A549 (cell line): ENCODE measurements at regions of chr19 and their contacts with region 1.

Region 1: DNA sequence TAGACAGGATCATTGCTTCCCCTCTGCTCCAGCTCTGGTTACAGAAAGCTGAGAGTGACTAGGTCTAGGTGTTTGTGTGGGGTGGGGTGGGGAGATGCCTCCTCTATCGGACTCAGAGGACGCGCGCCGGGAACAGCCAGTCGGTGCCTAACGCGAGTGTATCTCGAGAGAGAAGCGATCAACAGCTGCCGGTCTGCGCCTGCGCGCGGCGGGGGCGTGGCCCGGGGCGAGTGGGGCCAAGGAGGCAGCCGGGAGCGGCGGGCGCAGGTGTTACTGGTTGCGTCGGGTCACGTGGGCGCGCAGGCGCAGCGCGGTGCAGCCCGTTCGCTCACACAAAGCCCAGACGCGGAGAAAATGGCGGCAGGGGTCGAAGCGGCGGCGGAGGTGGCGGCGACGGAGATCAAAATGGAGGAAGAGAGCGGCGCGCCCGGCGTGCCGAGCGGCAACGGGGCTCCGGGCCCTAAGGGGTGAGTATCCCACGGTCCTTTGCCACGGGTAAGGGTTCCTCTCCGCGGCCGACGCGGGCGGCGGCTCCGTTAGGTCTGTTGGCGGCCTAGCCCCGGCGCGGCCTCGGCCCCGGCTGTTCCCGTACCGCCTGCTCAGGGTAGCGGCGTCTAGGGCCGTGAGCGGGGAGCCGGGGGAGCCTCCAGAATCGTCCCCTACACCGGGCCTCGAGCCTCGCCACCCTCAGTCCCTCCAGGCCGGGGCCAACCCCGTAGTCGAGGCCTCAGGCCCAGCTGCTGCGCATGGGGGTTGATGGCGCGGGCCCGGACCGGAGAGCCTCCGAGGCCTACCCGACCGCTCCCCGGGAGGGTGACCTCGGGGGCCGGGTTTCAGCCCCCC is at the start of gene HNRNPM:
- DNase-seq: peak; percentile 75 to 96
- ATAC-seq: peak; percentile 95
- H3K4me3 ChIP-seq: peak within 1 kb of the TSS; percentile 82
- H3K27ac ChIP-seq: peak within 1 kb of the TSS; percentile 90 to 99
- H3K4me1 ChIP-seq: peaks cover 32% of the 10 kb centered on the region
- CTCF ChIP-seq: no peak
- EP300 ChIP-seq: no peak
- POLR2A ChIP-seq: peak; percentile 64
- RAD21 ChIP-seq: no peak
- polyA plus RNA-seq, gene HNRNPM: 94.1 and 168 TPM in 2 replicates

Region 2: DNA sequence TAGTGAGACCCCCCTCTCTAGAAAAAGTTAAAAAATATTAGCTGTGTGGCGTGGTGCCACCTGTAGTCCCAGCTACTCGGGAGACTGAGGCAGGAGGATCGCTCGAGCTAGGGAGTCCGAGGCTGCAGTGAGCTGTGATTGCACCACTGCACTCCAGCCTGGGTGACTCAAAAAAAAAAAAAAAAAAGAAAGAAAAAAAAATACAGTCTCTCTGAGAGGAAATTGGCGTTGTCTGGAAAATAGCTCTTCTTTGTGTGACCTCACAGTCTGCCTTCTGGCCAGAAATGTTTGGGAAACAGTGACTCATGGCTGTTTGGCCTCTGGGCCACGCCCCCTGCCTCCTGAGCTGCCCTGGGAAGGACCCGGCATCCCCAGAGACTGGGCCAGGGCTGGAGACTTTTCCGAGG is 21.0 kb before region 1 on chr19:
- CTCF ChIA-PET with region 1: interaction called, 8 read pairs
- POLR2A ChIA-PET with region 1: interaction called, 19 read pairs
- DNase-seq: peak; percentile 67 to 93
- ATAC-seq: peak; percentile 96 to 99
- H3K4me3 ChIP-seq: no peak overlapping the region
- H3K27ac ChIP-seq: peak overlapping the region; percentile 82 to 91
- H3K4me1 ChIP-seq: peaks cover 17% of the 10 kb centered on the region
- CTCF ChIP-seq: no peak
- EP300 ChIP-seq: no peak
- POLR2A ChIP-seq: no peak
- RAD21 ChIP-seq: no peak

Region 3: GRCh38 chr19:8505680-8506401 is 61.0 kb after region 1 on chr19:
- CTCF ChIA-PET with region 1: interaction called, 10 read pairs
- POLR2A ChIA-PET with region 1: no interaction called
- DNase-seq: peak; percentile 71 to 81
- ATAC-seq: peak; percentile 86 to 91
- H3K4me3 ChIP-seq: peak overlapping the region; percentile 61
- H3K27ac ChIP-seq: peak overlapping the region; percentile 87 to 99
- H3K4me1 ChIP-seq: peaks cover 10% of the 10 kb centered on the region; the same call in 2 of the 3 replicates
- CTCF ChIP-seq: peak; percentile 73
- EP300 ChIP-seq: no peak
- POLR2A ChIP-seq: no peak
- RAD21 ChIP-seq: peak; percentile 69 to 76

Region 4: DNA sequence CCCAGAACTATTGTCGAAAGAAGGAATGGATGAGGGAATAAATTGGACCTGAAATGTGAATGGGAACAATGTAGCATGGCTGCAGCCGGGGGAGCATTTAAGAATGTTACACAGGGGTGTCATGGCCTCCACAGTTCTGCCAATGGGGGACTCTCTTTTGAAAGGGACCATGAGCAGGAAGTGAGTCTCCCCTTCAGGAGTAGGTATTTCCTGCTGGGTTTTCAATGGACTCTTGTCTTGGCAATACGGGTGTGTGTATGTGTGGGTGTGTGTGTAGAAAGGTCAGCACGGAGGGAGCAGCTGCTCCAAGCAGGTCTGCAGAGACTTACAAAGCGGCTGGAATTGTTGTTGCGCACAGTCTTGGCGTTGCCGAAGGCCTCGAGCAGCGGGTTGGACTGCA is 107.9 kb after region 1 on chr19:
- CTCF ChIA-PET with region 1: no interaction called
- POLR2A ChIA-PET with region 1: no interaction called
- DNase-seq: peak; percentile 36 to 65
- ATAC-seq: peak; percentile 22 to 74; a peak in 4 of 6 replicates
- H3K4me3 ChIP-seq: no peak overlapping the region
- H3K27ac ChIP-seq: no peak overlapping the region
- H3K4me1 ChIP-seq: no peaks in the 10 kb centered on the region
- CTCF ChIP-seq: no peak
- EP300 ChIP-seq: no peak
- POLR2A ChIP-seq: no peak
- RAD21 ChIP-seq: no peak